ENCODE measurements at regions of chr9 and their contacts with region 1.

Region 1: DNA sequence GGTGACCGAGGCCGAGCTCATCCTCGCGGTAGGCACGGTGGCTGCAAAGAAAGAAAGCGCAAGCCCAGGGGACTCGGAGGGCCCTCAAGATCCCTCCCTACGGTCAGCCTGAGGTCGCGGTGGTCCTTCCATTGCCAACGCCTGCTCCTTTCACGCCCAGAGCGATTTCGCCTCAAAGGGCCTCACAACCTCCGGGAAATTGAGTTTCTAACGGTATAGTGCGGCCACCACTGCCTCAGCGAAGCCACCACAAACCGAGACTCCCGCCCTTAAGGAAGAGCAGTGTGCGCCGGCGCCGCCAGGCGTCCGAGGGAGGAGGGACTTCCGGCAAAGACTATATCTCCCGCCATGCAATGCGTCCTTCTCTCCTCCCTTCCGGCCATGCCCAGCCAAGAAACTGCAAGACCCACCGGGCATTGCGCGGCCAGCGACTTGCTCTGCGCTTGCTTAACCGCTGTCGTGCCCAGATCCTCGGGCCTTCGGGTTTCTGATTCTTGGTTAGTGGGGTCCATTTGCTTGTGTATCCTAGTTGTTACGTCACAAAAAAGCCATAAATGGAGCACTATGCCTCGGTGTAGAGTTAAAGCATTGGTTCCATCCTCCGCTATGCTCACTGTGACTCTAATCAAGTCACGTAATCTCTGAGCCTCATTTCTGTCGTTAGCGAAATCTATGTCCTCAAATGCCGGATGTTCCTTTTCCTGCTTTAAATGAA is at the start of gene HAUS6:
- DNase-seq: peak; percentile 99
- H3K4me3 ChIP-seq: peak within 1 kb of the TSS; percentile 66 to 78 (median 74)
- H3K27ac ChIP-seq: peak within 1 kb of the TSS; percentile 71 to 90 (median 86)
- H3K4me1 ChIP-seq: peaks cover 0 to 36% (median 27%) of the 10 kb centered on the region in 4 donors
- H3K27me3 ChIP-seq: no peaks in the 10 kb centered on the region
- CTCF ChIP-seq: peak; percentile 59 to 77 (median 74)
- EP300 ChIP-seq: peak in 1 of 4 donors; percentile 53
- POLR2A ChIP-seq: peak in 1 of 2 donors; percentile 44
- total RNA-seq, gene HAUS6: 6.9 to 12.5 (median 7.8) TPM

Region 2: DNA sequence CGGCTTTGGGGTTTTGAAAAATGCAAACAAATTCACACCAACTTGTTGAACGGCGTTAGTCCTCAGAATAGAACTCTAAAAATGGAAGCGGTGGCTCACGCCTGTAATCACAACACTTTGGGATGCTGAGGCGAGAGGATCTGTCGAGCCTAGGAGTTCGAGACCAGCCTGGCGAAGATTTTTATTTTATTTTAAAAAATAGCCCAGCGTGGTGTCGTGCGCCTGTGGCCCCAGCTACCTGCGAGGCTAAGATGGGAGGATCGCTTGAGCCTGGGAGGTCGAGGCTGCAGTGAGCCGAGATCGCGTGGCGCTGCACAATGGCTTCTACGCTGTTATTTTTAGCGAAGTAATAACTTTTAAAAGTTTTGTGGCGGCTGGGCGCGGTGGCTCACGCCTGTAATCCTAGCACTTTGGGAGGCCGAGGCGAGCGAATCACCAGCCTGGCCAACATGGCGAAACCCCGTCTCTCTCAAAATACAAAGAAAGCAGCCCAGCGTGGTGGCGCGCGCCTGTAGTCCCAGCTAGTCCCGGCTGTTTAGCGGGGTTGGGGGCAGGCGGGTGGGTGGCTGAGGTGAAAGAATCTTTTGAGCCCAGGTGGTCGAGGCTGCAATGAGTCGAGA is 25.2 kb after region 1 on chr9:
- intact Hi-C with region 1: loop called (anchors 1 kb)
- DNase-seq: peak; percentile 72
- H3K4me3 ChIP-seq: peak overlapping the region; percentile 67 to 90 (median 80)
- H3K27ac ChIP-seq: peak overlapping the region; percentile 94 to 99 (median 96)
- H3K4me1 ChIP-seq: peaks cover 0 to 26% (median 15%) of the 10 kb centered on the region in 4 donors
- H3K27me3 ChIP-seq: no peaks in the 10 kb centered on the region
- CTCF ChIP-seq: no peak
- EP300 ChIP-seq: no peak
- POLR2A ChIP-seq: no peak

Region 3: DNA sequence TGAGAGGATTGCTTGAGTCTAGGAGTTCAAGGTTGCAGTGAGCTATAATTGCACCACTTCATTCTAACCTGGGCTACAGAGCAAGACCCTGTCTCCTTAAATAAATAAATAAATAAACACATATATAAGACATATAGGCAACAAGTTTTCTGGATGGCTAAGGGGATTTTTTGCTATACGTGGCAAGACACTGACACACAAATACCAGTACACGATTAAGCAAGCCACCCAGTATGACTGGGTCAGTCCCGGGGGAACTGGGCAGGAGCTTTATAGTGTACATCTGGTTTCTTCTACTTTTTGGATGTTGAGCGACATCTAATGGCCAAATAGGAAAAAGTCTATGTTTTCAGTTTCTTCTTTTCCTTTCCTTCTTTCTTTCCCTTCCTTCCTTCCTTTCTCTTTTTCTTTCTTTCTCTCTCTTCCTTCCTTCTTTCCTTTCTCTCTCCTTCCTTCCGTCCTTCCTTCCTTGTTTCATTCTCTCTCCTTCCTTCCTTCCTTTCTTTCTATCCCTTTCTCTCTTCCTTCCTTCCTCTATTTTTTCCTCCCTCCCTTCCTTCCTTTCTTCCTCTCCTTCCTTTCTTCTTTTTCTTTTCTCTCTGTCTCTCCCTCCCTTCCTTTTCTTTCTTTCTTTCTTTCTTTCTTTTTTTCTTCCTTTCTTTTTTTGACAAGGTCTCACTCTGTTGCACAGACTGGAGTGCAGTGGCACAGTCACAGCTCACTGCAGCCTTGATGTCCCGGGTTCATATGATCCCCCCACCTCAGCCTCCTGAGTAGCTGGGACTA is 71.5 kb after region 1 on chr9:
- intact Hi-C with region 1: loop called (anchors 2 kb)
- DNase-seq: peak; percentile 89
- H3K4me3 ChIP-seq: no peak overlapping the region
- H3K27ac ChIP-seq: no peak overlapping the region
- H3K4me1 ChIP-seq: peaks cover 0 to 3% (median 0%) of the 10 kb centered on the region in 4 donors
- H3K27me3 ChIP-seq: no peaks in the 10 kb centered on the region
- CTCF ChIP-seq: peak; percentile 21 to 71 (median 40)
- EP300 ChIP-seq: no peak
- POLR2A ChIP-seq: no peak

Region 4: GRCh38 chr9:19456996-19457692 is 354.4 kb after region 1 on chr9:
- intact Hi-C with region 1: loop called (anchors 5 kb)
- DNase-seq: peak; percentile 84
- H3K4me3 ChIP-seq: peak overlapping the region in 3 of 4 donors; percentile 2 to 29 (median 15)
- H3K27ac ChIP-seq: peak overlapping the region in 3 of 4 donors; percentile 13 to 45 (median 33)
- H3K4me1 ChIP-seq: peaks cover 0 to 11% (median 4%) of the 10 kb centered on the region in 4 donors
- H3K27me3 ChIP-seq: no peaks in the 10 kb centered on the region
- CTCF ChIP-seq: peak; percentile 91 to 97 (median 92)
- EP300 ChIP-seq: no peak
- POLR2A ChIP-seq: no peak